Activated CD8-positive, alpha-beta T cell treated with anti-CD3 and anti-CD28 coated beads, Interleukin-2, amount 10 ng/mL, durations not matched to agents 7 days and 5 days (primary cell): ENCODE measurements at regions of chr7 and their contacts with region 1.

Region 1: DNA sequence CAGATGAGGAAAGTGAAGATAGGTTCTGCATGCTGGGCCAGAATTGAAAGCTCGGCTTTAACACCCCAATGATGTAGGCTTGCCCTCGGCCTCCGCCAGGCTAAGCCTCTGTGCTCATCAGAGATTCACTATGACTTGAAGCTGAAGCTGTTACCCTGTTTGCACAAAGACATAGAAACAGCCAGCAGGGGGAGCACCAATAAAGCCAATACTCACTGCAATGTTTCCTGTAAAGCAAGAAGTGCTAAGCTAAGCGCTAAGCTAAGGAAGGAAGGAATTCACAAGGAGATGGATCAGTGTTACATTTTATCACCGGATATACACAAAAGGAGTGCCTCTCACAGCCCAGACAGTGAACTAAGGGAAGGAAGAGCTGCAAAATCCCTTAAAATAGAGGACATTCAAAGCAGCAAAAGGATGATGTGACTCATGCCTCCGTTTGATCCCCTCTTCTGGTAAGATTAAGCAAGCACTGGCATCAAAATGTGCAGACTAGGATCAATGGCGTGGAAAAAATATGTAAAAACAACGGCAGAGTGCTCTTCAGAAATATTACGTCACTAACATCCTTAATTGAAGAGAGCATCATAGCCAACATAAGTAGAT is 153.8 kb downstream of the COBL start:
- DNase-seq: peak; percentile 80
- ATAC-seq: peak; percentile 92
- H3K4me3 Mint-ChIP-seq: no peak overlapping the region
- H3K27ac Mint-ChIP-seq: no peak overlapping the region
- H3K4me1 Mint-ChIP-seq: no peaks in the 10 kb centered on the region
- H3K27me3 Mint-ChIP-seq: peaks cover 27% of the 10 kb centered on the region

Region 2: DNA sequence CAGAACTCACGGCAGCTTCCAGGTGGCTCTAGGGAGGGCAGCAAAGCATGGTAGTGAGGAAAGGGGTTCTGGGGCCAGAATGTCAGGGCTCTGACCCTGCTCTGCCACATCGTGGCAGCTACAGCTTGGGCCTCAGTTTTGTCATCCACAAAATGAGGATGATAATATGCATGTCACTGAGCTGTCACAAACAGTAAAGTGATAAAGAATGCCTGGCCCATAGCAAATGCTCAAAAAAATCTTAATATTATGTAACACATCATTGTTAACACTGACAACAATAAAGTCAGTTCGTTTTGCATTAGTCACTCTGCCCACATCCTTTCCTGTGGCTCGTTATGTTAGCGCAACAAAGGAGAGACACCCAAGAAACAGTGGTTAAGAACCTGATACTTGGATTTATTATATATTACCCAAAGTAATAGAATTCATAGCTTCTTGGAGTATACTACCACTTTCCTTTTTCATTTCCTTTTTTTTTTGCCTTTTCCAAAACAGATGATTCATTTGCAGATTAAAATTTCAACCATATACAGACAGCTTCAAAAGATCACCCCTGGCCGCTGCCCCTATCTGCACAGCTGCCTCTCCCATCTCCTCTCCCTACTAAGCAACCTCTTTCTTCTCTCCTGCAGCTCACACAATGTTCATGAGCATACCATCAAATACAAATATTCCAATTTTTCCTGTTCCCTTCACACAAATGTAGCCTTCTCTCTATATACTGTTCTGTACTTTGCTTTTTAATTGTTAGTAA is 552.1 kb before region 1 on chr7:
- CTCF ChIA-PET with region 1: interaction called, 16 read pairs
- POLR2A ChIA-PET with region 1: no interaction called
- DNase-seq: peak; percentile 82
- ATAC-seq: peak; percentile 82
- H3K4me3 Mint-ChIP-seq: peak overlapping the region; percentile 12
- H3K27ac Mint-ChIP-seq: peak overlapping the region; percentile 62
- H3K4me1 Mint-ChIP-seq: peaks cover 52% of the 10 kb centered on the region
- H3K27me3 Mint-ChIP-seq: peaks cover 10% of the 10 kb centered on the region

Region 3: GRCh38 chr7:50939021-50939420 is 223.8 kb before region 1 on chr7:
- CTCF ChIA-PET with region 1: no interaction called
- POLR2A ChIA-PET with region 1: no interaction called
- DNase-seq: no peak
- ATAC-seq: no peak
- H3K4me3 Mint-ChIP-seq: no peak overlapping the region
- H3K27ac Mint-ChIP-seq: no peak overlapping the region
- H3K4me1 Mint-ChIP-seq: no peaks in the 10 kb centered on the region
- H3K27me3 Mint-ChIP-seq: peaks cover 5% of the 10 kb centered on the region

Region 4: DNA sequence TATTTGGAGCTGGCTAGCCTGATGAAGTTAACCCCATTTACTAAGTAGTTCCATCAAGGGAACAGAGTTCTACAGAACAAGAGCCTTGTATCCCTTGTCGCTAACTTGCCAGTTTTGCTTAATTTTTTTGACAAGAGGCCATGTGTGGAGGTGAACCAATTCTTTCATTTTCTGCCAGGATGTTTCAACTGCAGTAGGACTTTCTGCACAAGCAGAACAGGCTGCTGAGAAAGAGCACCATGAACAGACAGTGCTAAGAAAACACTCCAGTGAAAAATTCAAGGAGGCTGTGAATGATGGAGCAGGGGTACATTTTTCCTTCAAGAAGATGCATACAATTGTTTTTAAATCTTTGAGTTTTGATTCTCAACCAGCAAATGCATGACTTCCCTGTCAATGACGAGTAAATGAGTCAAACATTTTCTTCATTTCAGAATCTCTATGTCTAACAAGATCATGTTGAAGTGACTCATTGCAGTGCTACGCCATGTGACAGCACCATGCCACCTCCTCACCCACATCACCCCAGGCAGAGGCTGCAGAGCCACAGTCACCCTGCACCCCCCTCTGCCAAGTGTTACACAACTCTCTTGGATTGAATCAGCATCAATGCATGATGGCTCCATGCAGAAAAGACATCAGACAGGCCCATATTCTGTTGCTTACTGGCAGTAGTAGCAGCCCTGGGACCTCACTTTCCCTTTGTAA is 39.4 kb before region 1 on chr7:
- CTCF ChIA-PET with region 1: interaction called, 11 read pairs
- POLR2A ChIA-PET with region 1: no interaction called
- DNase-seq: peak; percentile 41
- ATAC-seq: peak; percentile 44
- H3K4me3 Mint-ChIP-seq: no peak overlapping the region
- H3K27ac Mint-ChIP-seq: peak overlapping the region; percentile 37
- H3K4me1 Mint-ChIP-seq: peaks cover 27% of the 10 kb centered on the region
- H3K27me3 Mint-ChIP-seq: no peaks in the 10 kb centered on the region

Region 5: DNA sequence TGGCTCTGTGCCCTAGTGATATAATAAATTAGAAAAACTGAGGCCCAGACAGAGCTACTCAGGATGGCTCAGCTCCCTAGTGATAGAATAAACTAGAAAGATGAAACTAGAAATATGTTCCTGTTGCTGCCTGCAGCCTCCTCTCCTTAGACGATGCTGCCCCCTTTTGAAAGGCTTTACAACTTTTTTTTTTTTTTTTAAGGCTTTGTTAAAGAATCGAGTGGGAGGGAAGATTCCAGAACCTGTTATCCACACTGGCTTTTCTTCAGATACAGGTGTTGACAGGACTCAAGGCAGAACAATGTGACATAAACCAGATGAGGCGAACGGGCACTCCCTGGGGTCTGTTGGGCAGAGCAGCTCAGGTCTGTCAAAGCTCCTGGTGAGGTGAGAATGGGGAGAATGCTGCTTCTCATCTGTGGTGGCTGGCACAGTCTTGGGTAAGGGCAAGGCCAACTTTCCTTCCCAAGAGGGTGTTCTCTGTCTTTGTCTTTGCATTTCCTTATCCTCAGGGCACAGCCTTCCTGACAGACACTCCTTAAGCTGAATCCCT is 21.3 kb before region 1 on chr7:
- CTCF ChIA-PET with region 1: interaction called, 41 read pairs
- POLR2A ChIA-PET with region 1: no interaction called
- DNase-seq: no peak
- ATAC-seq: no peak
- H3K4me3 Mint-ChIP-seq: no peak overlapping the region
- H3K27ac Mint-ChIP-seq: no peak overlapping the region
- H3K4me1 Mint-ChIP-seq: peaks cover 13% of the 10 kb centered on the region
- H3K27me3 Mint-ChIP-seq: peaks cover 5% of the 10 kb centered on the region

Region 6: DNA sequence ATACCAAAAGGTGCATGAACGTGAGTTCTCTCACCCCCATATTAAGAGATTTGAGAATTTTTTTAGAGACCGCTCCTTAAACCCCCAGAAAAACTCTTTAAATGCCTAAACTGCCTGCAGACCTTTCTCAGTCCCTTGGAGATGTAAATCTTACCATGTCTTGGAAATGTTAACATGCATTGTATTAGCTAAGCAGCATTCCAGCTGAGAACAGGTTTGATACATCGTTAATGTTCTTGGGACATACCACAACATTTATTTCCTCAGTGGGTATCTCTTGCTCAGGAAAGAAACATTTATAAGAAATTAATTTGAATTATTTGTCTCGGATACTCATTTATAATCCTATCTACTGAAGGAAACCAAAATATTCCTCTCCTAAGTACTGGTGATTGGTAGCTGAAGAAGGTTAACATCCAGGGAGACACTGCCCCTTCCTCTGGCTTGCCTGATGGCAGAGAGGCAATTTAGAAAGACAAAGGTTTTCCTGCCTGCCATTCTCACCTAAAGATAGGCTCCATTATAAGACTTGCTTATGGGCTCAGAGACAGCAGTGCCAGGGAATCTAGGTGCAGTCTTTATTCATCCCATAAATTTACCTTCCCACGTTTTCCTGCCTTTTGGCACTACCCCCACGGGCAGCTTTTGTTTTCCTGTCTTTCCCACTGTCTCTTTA is 12.6 kb after region 1 on chr7:
- CTCF ChIA-PET with region 1: interaction called, 25 read pairs
- POLR2A ChIA-PET with region 1: no interaction called
- DNase-seq: no peak
- ATAC-seq: no peak
- H3K4me3 Mint-ChIP-seq: no peak overlapping the region
- H3K27ac Mint-ChIP-seq: no peak overlapping the region
- H3K4me1 Mint-ChIP-seq: no peaks in the 10 kb centered on the region
- H3K27me3 Mint-ChIP-seq: peaks cover 9% of the 10 kb centered on the region

Region 7: GRCh38 chr7:51366930-51367613 is 204.2 kb after region 1 on chr7:
- CTCF ChIA-PET with region 1: interaction called, 96 read pairs
- POLR2A ChIA-PET with region 1: interaction called, 3 read pairs
- DNase-seq: peak; percentile 22
- ATAC-seq: no peak
- H3K4me3 Mint-ChIP-seq: no peak overlapping the region
- H3K27ac Mint-ChIP-seq: no peak overlapping the region
- H3K4me1 Mint-ChIP-seq: no peaks in the 10 kb centered on the region
- H3K27me3 Mint-ChIP-seq: peaks cover 2% of the 10 kb centered on the region